Right cardiac atrium (tissue), 5 donors: ENCODE measurements at regions of chrX and their contacts with region 1.

Region 1: DNA sequence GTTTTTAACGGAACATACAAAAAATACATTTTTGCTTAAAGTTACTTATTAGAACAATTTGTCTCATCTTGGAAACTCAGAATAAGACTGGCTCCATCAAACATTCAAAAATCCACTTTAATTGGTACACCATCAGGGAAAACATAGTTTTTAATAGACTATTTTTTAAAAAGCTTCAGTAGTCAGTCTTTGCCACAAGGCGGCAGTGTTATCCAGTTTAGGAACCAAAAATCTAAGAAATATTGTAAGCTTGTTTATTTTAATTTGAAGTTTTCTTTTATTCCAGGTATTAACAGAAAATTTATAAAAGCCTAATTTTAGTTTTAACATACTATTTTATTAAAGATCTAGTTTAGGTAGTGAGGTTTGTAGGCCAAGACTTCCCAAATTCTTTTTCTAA is 107.7 kb downstream of the APOOL start:
- DNase-seq: no peak
- ATAC-seq: no peak
- H3K4me3 ChIP-seq: no peak overlapping the region
- H3K27ac ChIP-seq: no peak overlapping the region
- H3K4me1 ChIP-seq: no peaks in the 10 kb centered on the region
- H3K27me3 ChIP-seq: no peaks in the 10 kb centered on the region

Region 2: GRCh38 chrX:85544609-85545008 is 433.3 kb after region 1 on chrX:
- intact Hi-C with region 1: loop called in 2 of 4 experiments (anchors 5 to 10 kb)
- DNase-seq: no peak
- ATAC-seq: no peak
- H3K4me3 ChIP-seq: no peak overlapping the region
- H3K27ac ChIP-seq: no peak overlapping the region
- H3K4me1 ChIP-seq: no peaks in the 10 kb centered on the region
- H3K27me3 ChIP-seq: no peaks in the 10 kb centered on the region